ENCODE measurements at regions of chr5 and their contacts with region 1.

Region 1: DNA sequence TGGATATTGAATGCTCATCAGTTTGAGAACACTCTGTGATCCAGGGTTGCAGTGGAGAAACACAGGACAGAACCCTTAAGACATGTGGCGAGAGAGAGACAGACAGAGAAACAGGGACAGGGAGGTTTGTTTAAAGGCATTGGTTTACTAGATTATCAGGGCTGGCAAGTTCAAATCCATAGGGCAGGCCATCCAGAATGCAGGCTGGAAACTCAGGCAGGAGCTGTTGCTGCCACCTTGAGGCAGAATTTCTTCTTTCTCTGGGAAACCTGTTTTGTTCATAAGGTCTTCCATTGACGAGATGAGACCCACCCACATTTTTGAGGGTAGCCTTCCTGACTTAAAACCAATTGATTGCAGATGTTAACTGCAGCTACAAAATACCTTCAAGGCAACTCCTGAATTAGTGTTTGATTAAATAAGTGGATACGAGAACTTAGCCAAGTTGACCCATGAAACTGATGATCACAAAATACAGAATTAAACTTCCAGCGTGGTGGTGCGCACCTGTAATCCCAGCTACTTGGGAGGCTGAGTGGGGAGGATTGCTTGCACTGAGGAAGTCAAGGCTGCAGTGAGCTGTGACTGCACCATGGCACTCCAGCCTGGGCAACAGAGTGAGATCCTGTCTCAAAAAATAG is 55.9 kb downstream of the NSUN2 start:
- DNase-seq: no peak

Region 2: GRCh38 chr5:6291961-6292360 is 285.0 kb before region 1 on chr5:
- intact Hi-C with region 1: loop called (anchors 5 kb)
- DNase-seq: no peak

Region 3: DNA sequence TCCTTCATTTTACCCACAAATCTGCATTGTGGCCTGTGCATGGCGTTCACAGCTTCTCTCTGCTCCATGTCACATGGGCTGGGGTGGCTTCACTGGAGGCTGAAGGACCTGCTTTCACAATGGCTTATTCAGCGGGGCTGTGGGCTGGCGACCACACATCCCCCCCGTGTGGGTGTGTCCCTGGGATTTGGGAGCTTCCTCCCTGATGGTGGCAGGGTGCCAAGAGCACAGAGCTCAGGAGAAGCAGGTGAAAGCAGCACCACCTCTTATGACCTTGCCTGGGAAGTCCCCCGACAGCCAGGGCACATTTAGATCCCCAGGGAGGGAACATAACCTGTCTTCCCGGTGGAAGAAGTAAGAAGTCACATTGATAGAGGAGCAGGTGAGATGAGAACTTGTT is 193.6 kb before region 1 on chr5:
- intact Hi-C with region 1: loop called (anchors 5 kb)
- DNase-seq: no peak

Region 4: GRCh38 chr5:6448622-6449464 is 128.1 kb before region 1 on chr5 and contains the start of gene UBE2QL1:
- intact Hi-C with region 1: loop called (anchors 5 kb)
- DNase-seq: peak; percentile 69
- total RNA-seq, gene UBE2QL1: 13.1 TPM